WTC11 (cell line): ENCODE measurements at regions of chr10 and their contacts with region 1.

Region 1: GRCh38 chr10:103598654-103599115 is 105.2 kb downstream of the NEURL1 start:
- DNase-seq: peak; percentile 66
- ATAC-seq: peak; percentile 90
- H3K4me3 Mint-ChIP-seq: no peak overlapping the region
- H3K27ac Mint-ChIP-seq: no peak overlapping the region
- H3K4me1 Mint-ChIP-seq: peaks cover 11% of the 10 kb centered on the region
- H3K27me3 Mint-ChIP-seq: peaks cover 4% of the 10 kb centered on the region; the same call in 1 of the 2 replicates
- CTCF ChIP-seq: no peak; the same call in 1 of the 2 replicates

Region 2: GRCh38 chr10:103612462-103613365 is 14.0 kb after region 1 on chr10:
- CTCF ChIA-PET with region 1: interaction called, 11 read pairs
- POLR2A ChIA-PET with region 1: no interaction called
- DNase-seq: no peak
- ATAC-seq: no peak
- H3K4me3 Mint-ChIP-seq: no peak overlapping the region
- H3K27ac Mint-ChIP-seq: no peak overlapping the region
- H3K4me1 Mint-ChIP-seq: peaks cover 10% of the 10 kb centered on the region
- H3K27me3 Mint-ChIP-seq: no peaks in the 10 kb centered on the region
- CTCF ChIP-seq: no peak

Region 3: DNA sequence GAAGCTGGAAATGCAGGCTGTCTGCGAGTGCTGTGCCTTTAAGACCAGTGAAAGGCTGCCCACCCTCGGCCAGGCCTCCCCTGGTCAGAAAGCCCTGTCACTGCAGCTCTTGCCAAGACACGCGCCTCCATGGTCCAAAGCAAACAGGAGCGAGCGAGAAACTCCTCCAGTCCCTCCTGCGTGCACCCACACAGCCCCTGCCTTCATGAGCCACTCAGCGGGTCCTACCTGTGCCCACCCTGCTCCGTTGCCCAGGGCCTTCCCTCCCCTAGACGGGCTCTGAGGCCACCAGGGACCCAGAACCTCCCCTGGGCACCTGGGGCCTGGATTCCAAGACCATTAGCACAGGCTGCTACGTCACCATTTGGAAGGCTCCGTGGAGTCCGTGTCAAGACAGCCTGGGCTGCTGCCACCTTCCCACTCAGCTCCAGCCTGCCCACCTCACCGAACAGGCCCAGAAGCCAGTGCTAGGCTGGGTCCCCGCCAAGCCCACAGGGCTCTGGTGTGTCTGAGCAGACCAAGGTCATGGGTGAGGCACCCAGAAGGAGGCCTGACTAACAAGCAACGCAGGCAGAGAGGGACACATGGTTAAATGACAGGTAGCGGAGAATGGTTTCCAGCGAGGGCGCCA is 39.4 kb after region 1 on chr10:
- CTCF ChIA-PET with region 1: interaction called, 11 read pairs
- POLR2A ChIA-PET with region 1: no interaction called
- DNase-seq: no peak
- ATAC-seq: no peak
- H3K4me3 Mint-ChIP-seq: no peak overlapping the region
- H3K27ac Mint-ChIP-seq: no peak overlapping the region
- H3K4me1 Mint-ChIP-seq: peaks cover 51% of the 10 kb centered on the region
- H3K27me3 Mint-ChIP-seq: no peaks in the 10 kb centered on the region
- CTCF ChIP-seq: no peak

Region 4: DNA sequence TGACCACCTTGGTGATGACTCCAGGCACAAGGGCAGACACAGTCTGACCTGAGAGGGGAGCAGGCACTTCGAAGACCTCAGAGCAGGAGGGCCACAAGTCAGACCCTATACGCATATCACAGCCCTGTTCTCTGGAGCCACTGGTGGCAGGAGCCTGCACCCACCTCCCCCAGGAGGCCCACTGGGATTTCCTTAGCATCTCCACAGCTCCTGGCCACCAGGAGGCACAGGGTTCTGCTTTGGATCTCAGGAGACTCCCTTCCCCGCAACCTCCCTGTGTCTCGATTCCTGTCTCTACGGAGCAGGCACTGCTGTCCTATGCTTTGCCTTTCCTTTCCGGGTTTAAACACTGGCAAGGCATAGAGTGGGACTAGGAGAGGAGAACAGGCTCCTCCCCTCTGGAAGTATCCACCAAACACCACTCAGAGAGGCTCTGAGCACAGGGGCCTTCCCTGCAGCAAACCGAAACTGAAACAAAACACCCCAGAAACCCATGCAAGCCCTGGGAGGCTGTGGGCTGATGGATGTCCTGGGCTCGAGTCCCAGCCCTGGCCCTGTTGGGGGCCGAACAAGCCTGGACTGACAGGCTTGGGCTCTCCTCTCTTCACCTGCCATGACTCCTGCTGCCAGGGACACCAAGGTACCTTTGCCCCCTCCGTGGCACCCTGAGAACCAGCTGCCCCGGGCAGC is 61.1 kb after region 1 on chr10:
- CTCF ChIA-PET with region 1: interaction called, 10 read pairs
- POLR2A ChIA-PET with region 1: no interaction called
- DNase-seq: peak; percentile 23
- ATAC-seq: peak; percentile 47
- H3K4me3 Mint-ChIP-seq: no peak overlapping the region; the same call in 1 of the 2 replicates
- H3K27ac Mint-ChIP-seq: no peak overlapping the region; the same call in 1 of the 2 replicates
- H3K4me1 Mint-ChIP-seq: peaks cover 16% of the 10 kb centered on the region
- H3K27me3 Mint-ChIP-seq: no peaks in the 10 kb centered on the region
- CTCF ChIP-seq: no peak

Region 5: DNA sequence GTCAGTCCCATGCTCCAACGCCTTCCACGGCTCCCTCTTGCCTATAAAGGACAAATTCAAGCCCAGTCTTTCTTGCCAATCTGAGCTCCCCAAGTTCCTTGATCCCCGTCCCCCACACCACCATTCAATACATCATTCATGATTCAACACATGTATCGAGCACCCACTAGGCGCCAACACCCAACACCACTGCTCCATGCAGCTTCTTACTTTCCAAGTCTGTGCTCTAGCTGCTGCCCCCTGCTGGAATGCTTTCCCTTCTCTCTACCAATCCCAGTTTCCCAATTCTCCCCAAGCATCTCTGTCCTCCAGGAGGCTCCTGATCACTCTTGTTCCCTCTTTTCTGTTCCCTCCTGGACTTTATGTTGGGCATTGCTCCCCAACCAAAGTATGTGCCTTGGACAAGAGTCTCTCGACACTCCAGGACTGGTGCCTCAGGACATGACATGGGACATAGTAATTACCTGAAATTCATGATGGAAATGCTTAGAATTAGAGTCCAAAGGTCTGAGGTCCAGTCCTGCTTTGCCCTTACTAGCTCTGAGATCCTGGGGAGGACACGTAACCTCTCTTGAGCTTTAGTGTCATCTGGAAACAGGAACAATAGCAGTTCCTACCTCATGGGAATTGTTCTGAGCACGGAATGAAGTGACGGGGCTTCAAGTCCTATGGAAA is 67.5 kb after region 1 on chr10:
- CTCF ChIA-PET with region 1: interaction called, 23 read pairs
- POLR2A ChIA-PET with region 1: no interaction called
- DNase-seq: peak; percentile 70
- ATAC-seq: peak; percentile 14; the same call in 1 of the 2 replicates
- H3K4me3 Mint-ChIP-seq: no peak overlapping the region
- H3K27ac Mint-ChIP-seq: peak overlapping the region; percentile 73; the same call in 1 of the 2 replicates
- H3K4me1 Mint-ChIP-seq: peaks cover 28% of the 10 kb centered on the region
- H3K27me3 Mint-ChIP-seq: no peaks in the 10 kb centered on the region
- CTCF ChIP-seq: 0 out of 2 replicates have a peak, but pooled peaks have one; percentile 29

Region 6: DNA sequence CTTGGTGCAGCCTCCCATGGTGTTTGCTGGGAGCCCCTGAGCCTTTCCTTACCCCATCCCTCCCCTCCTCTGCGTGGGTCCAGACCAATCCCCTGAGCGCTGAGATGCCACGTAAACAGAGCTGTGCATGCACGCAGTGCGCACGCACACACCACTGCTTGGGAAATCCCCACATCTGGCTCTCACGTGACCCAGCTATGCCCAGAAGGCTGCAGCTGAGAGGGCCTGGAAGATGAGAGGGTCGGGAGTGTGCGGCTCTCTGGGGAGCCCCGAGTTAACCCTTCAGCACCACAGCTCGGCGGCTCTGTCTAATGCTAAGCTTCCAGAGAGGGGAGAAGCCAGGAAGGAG is 79.5 kb after region 1 on chr10:
- CTCF ChIA-PET with region 1: interaction called, 18 read pairs
- POLR2A ChIA-PET with region 1: no interaction called
- DNase-seq: no peak
- ATAC-seq: no peak; the same call in 1 of the 2 replicates
- H3K4me3 Mint-ChIP-seq: no peak overlapping the region
- H3K27ac Mint-ChIP-seq: no peak overlapping the region
- H3K4me1 Mint-ChIP-seq: peaks cover 15% of the 10 kb centered on the region
- H3K27me3 Mint-ChIP-seq: no peaks in the 10 kb centered on the region
- CTCF ChIP-seq: no peak

Region 7: GRCh38 chr10:103696411-103697145 is 97.9 kb after region 1 on chr10:
- CTCF ChIA-PET with region 1: interaction called, 14 read pairs
- POLR2A ChIA-PET with region 1: no interaction called
- DNase-seq: peak; percentile 55
- ATAC-seq: peak; percentile 53
- H3K4me3 Mint-ChIP-seq: no peak overlapping the region
- H3K27ac Mint-ChIP-seq: no peak overlapping the region; the same call in 1 of the 2 replicates
- H3K4me1 Mint-ChIP-seq: peaks cover 28% of the 10 kb centered on the region
- H3K27me3 Mint-ChIP-seq: peaks cover 32% of the 10 kb centered on the region
- CTCF ChIP-seq: no peak